Caco-2 (cell line): ENCODE measurements at regions of chr2 and their contacts with region 1.

Region 1: DNA sequence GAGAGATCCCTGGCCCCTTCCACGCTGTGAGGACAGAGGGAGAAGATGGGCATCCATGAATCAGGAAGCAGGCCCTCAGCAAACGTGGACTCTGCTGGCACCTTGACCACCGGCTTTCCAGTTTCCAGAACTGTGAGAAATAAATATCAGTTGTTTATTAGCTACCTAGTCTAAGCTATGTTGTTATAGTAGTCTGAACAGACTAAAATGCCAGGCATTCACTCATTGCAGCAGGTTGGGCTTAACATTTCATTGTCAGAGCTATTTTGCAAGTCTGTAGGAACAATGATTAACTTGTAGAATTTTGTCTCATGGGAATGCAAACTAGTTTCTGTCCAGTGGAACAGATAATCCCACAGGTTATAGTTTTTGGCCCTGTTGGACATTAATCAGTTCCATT is 24.8 kb upstream of the TBC1D8 start:
- DNase-seq: peak in 1 of 2 experiments; percentile 59
- H3K4me3 ChIP-seq: no peak overlapping the region
- H3K4me3 Mint-ChIP-seq: no peak overlapping the region
- H3K27ac Mint-ChIP-seq: no peak overlapping the region
- H3K4me1 ChIP-seq: peaks cover 11% of the 10 kb centered on the region
- H3K4me1 Mint-ChIP-seq: peaks cover 7% of the 10 kb centered on the region
- H3K27me3 ChIP-seq: no peaks in the 10 kb centered on the region
- H3K27me3 Mint-ChIP-seq: no peaks in the 10 kb centered on the region
- CTCF ChIP-seq: no peak

Region 2: GRCh38 chr2:101113396-101114267 is 62.4 kb before region 1 on chr2:
- CTCF ChIA-PET with region 1: no interaction called
- POLR2A ChIA-PET with region 1: no interaction called
- intact Hi-C with region 1: no loop called
- DNase-seq: peak in 1 of 2 experiments; percentile 32
- H3K4me3 ChIP-seq: no peak overlapping the region
- H3K4me3 Mint-ChIP-seq: peak overlapping the region; percentile 8
- H3K27ac Mint-ChIP-seq: peak overlapping the region; percentile 33
- H3K4me1 ChIP-seq: peaks cover 31% of the 10 kb centered on the region
- H3K4me1 Mint-ChIP-seq: peaks cover 32% of the 10 kb centered on the region
- H3K27me3 ChIP-seq: no peaks in the 10 kb centered on the region
- H3K27me3 Mint-ChIP-seq: no peaks in the 10 kb centered on the region
- CTCF ChIP-seq: no peak

Region 3: GRCh38 chr2:101197215-101197745 is 21.3 kb after region 1 on chr2:
- CTCF ChIA-PET with region 1: no interaction called
- POLR2A ChIA-PET with region 1: no interaction called
- intact Hi-C with region 1: loop called (anchors 2 kb)
- DNase-seq: no peak
- H3K4me3 ChIP-seq: no peak overlapping the region
- H3K4me3 Mint-ChIP-seq: no peak overlapping the region
- H3K27ac Mint-ChIP-seq: no peak overlapping the region
- H3K4me1 ChIP-seq: no peaks in the 10 kb centered on the region
- H3K4me1 Mint-ChIP-seq: no peaks in the 10 kb centered on the region
- H3K27me3 ChIP-seq: no peaks in the 10 kb centered on the region
- H3K27me3 Mint-ChIP-seq: no peaks in the 10 kb centered on the region
- CTCF ChIP-seq: peak; percentile 7 to 28